ENCODE measurements at regions of chr11 and their contacts with region 1.

Region 1: DNA sequence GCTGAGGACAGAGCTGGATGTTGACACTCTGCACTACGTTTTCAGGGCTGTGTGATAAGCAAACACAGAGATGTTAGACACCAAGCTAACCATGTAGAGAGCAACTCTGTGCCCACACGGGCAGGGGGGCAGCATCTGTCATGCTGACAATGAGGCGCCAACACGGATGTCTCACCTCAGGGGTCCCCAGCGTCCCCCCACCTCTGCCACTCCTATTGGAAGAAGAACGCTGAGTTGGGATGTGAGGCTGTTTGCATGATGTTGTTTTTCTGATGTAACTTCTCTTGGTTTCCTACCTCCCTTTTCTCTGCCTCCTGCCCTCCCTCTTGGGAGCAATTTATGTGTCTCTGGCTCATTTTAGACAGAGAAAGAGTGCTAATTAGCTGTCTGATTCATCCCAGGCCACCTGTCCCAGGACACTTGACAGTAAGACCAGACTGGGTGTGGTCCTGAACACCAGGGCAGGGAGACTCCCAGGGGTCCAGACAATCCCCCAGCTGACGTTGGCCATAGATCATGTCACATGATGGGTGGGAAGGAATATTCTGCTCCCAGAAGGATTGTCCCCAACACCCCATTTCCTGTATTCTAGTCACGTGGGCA is 89.2 kb upstream of the NCAM1 start:
- DNase-seq: no peak
- ATAC-seq: no peak
- H3K4me3 ChIP-seq: no peak overlapping the region
- H3K4me3 Mint-ChIP-seq: no peak overlapping the region
- H3K27ac ChIP-seq: no peak overlapping the region
- H3K27ac Mint-ChIP-seq: no peak overlapping the region
- H3K4me1 ChIP-seq: no peaks in the 10 kb centered on the region
- H3K4me1 Mint-ChIP-seq: no peaks in the 10 kb centered on the region
- H3K27me3 ChIP-seq: no peaks in the 10 kb centered on the region
- H3K27me3 Mint-ChIP-seq: peaks cover 6% of the 10 kb centered on the region
- CTCF ChIP-seq: no peak

Region 2: GRCh38 chr11:112734207-112734606 is 137.8 kb before region 1 on chr11:
- CTCF ChIA-PET with region 1: no interaction called
- POLR2A ChIA-PET with region 1: no interaction called
- intact Hi-C with region 1: no loop called
- DNase-seq: no peak
- ATAC-seq: no peak
- H3K4me3 ChIP-seq: no peak overlapping the region
- H3K4me3 Mint-ChIP-seq: no peak overlapping the region
- H3K27ac ChIP-seq: no peak overlapping the region
- H3K27ac Mint-ChIP-seq: no peak overlapping the region
- H3K4me1 ChIP-seq: no peaks in the 10 kb centered on the region
- H3K4me1 Mint-ChIP-seq: no peaks in the 10 kb centered on the region
- H3K27me3 ChIP-seq: no peaks in the 10 kb centered on the region
- H3K27me3 Mint-ChIP-seq: peaks cover 6% of the 10 kb centered on the region
- CTCF ChIP-seq: no peak

Region 3: GRCh38 chr11:112806876-112807275 is 65.1 kb before region 1 on chr11:
- CTCF ChIA-PET with region 1: no interaction called
- POLR2A ChIA-PET with region 1: no interaction called
- intact Hi-C with region 1: no loop called
- DNase-seq: no peak
- ATAC-seq: no peak
- H3K4me3 ChIP-seq: no peak overlapping the region
- H3K4me3 Mint-ChIP-seq: no peak overlapping the region
- H3K27ac ChIP-seq: no peak overlapping the region
- H3K27ac Mint-ChIP-seq: no peak overlapping the region
- H3K4me1 ChIP-seq: no peaks in the 10 kb centered on the region
- H3K4me1 Mint-ChIP-seq: no peaks in the 10 kb centered on the region
- H3K27me3 ChIP-seq: peaks cover 0 to 2% of the 10 kb centered on the region in 2 experiments
- H3K27me3 Mint-ChIP-seq: no peaks in the 10 kb centered on the region
- CTCF ChIP-seq: no peak

Region 4: GRCh38 chr11:112911124-112911523 is 39.1 kb after region 1 on chr11:
- CTCF ChIA-PET with region 1: no interaction called
- POLR2A ChIA-PET with region 1: no interaction called
- intact Hi-C with region 1: loop called in 1 of 2 experiments (anchors 1 kb)
- DNase-seq: no peak
- ATAC-seq: no peak
- H3K4me3 ChIP-seq: no peak overlapping the region
- H3K4me3 Mint-ChIP-seq: no peak overlapping the region
- H3K27ac ChIP-seq: no peak overlapping the region
- H3K27ac Mint-ChIP-seq: no peak overlapping the region
- H3K4me1 ChIP-seq: no peaks in the 10 kb centered on the region
- H3K4me1 Mint-ChIP-seq: no peaks in the 10 kb centered on the region
- H3K27me3 ChIP-seq: peaks cover 0 to 2% of the 10 kb centered on the region in 2 experiments
- H3K27me3 Mint-ChIP-seq: peaks cover 18% of the 10 kb centered on the region
- CTCF ChIP-seq: no peak

Measured in CD4-positive, alpha-beta T cell (primary cell).